ENCODE measurements at regions of chr6 and their contacts with region 1.

Region 1: GRCh38 chr6:87029711-87030314 is 65.1 kb downstream of the CGA start:
- DNase-seq: peak; percentile 24
- ATAC-seq: peak; percentile 84
- H3K4me3 ChIP-seq: no peak overlapping the region
- H3K27ac ChIP-seq: no peak overlapping the region
- H3K4me1 ChIP-seq: no peaks in the 10 kb centered on the region
- H3K27me3 ChIP-seq: no peaks in the 10 kb centered on the region
- CTCF ChIP-seq: peak; percentile 73; the same call in 1 of the 2 replicates

Region 2: DNA sequence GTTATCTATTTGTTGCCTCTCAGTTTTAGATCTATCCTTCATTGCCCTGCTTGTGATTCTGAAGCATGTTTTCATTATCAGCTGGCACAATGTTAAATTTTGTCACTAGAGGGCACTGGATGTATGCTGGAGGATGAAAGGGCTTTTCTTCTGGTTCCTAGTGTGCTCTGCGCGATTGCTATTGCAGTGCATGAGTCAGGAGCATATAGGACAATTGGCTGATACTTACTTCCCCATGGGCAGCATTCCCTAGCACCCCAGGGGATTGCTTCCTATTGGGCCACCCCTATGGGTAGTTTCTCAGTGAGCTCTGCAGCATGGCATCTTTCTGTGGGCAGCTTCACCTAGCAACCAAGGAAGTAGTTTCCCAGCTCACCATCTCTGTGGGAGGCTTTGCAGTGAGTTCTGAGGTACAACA is 1106.8 kb before region 1 on chr6:
- CTCF ChIA-PET with region 1: no interaction called
- POLR2A ChIA-PET with region 1: no interaction called
- in situ Hi-C with region 1: no loop called
- intact Hi-C with region 1: loop called (anchors 10 kb)
- DNase-seq: peak; percentile 45
- ATAC-seq: peak; percentile 95
- H3K4me3 ChIP-seq: no peak overlapping the region
- H3K27ac ChIP-seq: no peak overlapping the region
- H3K4me1 ChIP-seq: no peaks in the 10 kb centered on the region
- H3K27me3 ChIP-seq: no peaks in the 10 kb centered on the region
- CTCF ChIP-seq: peak; percentile 86

Region 3: GRCh38 chr6:87378947-87379346 is 349.1 kb after region 1 on chr6:
- CTCF ChIA-PET with region 1: no interaction called
- POLR2A ChIA-PET with region 1: no interaction called
- in situ Hi-C with region 1: no loop called
- intact Hi-C with region 1: no loop called
- DNase-seq: no peak
- ATAC-seq: no peak
- H3K4me3 ChIP-seq: no peak overlapping the region
- H3K27ac ChIP-seq: no peak overlapping the region
- H3K4me1 ChIP-seq: no peaks in the 10 kb centered on the region
- H3K27me3 ChIP-seq: no peaks in the 10 kb centered on the region
- CTCF ChIP-seq: no peak